Ovary (tissue), 10 donors: ENCODE measurements at regions of chr19 and their contacts with region 1.

Region 1: DNA sequence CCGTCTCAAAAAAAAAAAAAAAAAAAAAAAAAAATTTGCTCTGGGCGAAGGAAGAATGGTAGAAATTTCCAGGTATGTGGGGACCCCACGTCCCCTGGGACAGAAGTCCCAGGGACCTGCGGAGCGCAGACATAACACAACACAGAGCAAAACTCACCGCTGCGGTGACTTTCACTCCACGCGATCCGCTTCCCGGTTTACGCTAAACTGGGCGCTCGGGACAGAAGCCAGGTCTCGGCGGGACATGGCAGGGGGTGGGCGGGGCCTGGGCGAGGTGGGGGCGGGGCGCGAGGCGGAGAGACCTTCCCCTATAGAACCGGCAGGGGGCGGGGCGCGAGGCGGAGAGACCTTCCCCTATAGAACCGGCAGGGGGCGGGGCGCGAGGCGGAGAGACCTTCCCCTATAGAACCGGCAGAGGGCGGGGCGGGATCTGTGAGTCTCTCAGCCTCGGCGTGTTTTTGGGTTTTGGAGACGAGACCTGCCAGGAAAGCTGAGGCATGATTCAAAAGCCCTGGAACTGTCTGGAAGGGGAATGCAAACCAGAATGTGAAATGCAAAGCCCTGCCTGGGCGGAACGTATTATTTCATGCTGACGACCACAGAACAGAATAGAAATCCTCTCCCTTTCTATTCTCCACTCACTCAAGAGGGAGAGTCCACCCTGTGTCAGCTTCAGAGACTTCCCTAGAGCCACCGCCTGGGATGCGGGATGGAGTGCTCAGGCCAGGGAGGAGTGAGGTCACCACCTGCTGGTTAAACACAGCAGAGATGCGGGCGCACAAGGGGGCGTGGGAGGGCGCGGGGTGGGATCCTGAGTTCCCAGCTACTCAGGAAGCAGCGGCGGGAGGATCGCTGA is 20.2 kb upstream of the ERVV-1 start:
- DNase-seq: peak; percentile 80 to 88 (median 84)
- H3K4me3 ChIP-seq: peak overlapping the region; percentile 57
- H3K27ac ChIP-seq: peak overlapping the region in 1 of 2 donors; percentile 73
- H3K4me1 ChIP-seq: peaks cover 2% of the 10 kb centered on the region
- H3K27me3 ChIP-seq: no peaks in the 10 kb centered on the region
- CTCF ChIP-seq: peak; percentile 6 to 77 (median 37)
- EP300 ChIP-seq: no peak
- POLR2A ChIP-seq: no peak

Region 2: GRCh38 chr19:52945656-52946319 is 47.8 kb before region 1 on chr19:
- intact Hi-C with region 1: loop called in 1 of 4 experiments (anchors 2 kb)
- DNase-seq: no peak
- H3K4me3 ChIP-seq: no peak overlapping the region
- H3K27ac ChIP-seq: no peak overlapping the region
- H3K4me1 ChIP-seq: no peaks in the 10 kb centered on the region
- H3K27me3 ChIP-seq: no peaks in the 10 kb centered on the region
- CTCF ChIP-seq: no peak
- EP300 ChIP-seq: no peak
- POLR2A ChIP-seq: no peak

Region 3: DNA sequence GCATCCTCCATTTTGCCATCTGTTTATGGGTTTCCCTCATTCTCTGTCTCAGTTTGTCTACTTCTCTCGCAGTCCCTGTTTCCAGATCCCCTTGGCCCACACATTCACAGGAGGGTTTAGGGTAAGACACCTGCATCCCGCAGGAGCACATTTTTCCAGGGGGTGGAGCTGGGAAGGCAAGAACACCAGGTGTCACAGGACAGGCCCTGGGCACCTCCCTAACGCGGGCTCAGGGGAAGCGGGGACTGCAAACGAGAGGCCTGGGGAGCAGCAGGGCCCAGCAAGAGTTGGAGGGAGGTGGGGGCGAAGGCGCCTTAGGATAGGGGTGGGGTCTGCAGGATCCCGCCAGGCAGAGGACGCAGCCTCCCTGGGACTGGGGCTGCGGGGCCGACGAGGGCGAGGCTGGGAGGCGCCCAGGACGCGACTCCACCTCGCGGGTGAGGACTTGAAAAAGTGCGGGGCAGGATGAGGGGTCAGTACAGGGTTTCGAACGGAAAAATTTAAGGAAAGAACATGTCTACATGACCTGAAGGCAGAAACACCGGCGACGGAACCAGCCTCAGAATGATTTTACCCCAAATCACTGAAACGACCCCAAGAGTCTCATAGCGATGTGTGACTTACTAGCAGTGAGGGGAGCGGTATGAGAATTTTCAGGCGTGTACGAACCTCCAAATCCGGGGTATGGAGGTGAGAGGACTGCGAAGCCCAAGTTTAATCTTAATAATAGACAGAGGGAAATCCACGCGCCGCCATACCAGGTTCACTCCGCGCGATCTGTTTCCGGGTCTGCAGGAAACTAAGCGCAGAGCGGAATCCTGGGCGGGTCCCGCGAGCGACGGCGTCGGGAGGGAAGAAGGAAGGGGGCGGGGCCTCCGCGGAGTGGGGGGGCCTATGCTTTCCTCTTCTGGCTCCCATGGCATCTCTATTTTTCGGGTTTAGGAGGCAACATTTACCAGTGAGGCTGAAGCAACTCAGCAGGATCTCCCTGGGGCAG is 43.8 kb after region 1 on chr19:
- intact Hi-C with region 1: no loop called
- DNase-seq: no peak
- H3K4me3 ChIP-seq: no peak overlapping the region
- H3K27ac ChIP-seq: no peak overlapping the region
- H3K4me1 ChIP-seq: no peaks in the 10 kb centered on the region
- H3K27me3 ChIP-seq: no peaks in the 10 kb centered on the region
- CTCF ChIP-seq: no peak
- EP300 ChIP-seq: no peak
- POLR2A ChIP-seq: no peak